ENCODE measurements at regions of chr5 and their contacts with region 1.

Region 1: DNA sequence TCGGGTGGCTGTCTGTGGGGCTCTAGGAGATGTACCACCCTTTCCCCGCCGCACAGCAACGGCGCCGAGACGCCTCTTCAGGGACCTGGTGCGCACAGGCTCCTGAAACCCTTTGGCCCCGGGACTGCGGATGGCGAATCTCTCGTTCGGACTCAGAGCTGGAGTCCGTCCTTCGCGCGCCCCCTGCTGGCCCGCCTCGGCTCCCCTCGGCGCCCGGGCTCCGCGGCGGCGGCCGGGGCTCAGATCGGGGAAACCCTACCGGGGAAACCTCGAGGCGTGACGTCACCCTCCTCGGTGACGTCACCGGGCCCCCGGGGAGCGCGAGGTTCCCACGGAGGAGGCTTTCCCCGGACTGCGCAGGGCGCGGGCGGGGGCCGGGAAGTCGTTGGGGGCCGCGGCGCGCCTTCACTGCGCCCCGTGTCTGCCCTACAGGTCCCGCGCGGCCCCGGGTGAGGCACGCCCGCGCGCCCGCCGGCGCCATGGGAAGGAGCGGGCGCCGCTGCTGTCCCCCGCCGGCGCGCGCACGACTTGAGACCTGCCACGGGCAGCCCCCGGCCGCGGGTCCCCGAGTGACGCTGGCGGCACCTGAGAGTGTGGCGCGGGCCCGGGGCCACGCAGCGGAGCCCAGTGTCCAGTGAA is 7.9 kb downstream of the PRR7 start:
- DNase-seq: peak; percentile 90 to 97 (median 95)
- H3K4me3 ChIP-seq: peak overlapping the region; percentile 59
- H3K4me3 Mint-ChIP-seq: peak overlapping the region; percentile 46 to 93 (median 89)
- H3K27ac ChIP-seq: peak overlapping the region; percentile 87
- H3K27ac Mint-ChIP-seq: peak overlapping the region in 7 of 8 donors; percentile 66 to 97 (median 85)
- H3K4me1 ChIP-seq: peaks cover 20% of the 10 kb centered on the region
- H3K4me1 Mint-ChIP-seq: peaks cover 19 to 32% (median 19%) of the 10 kb centered on the region in 3 donors
- H3K27me3 ChIP-seq: no peaks in the 10 kb centered on the region
- H3K27me3 Mint-ChIP-seq: peaks cover 0 to 4% of the 10 kb centered on the region in 2 donors

Region 2: DNA sequence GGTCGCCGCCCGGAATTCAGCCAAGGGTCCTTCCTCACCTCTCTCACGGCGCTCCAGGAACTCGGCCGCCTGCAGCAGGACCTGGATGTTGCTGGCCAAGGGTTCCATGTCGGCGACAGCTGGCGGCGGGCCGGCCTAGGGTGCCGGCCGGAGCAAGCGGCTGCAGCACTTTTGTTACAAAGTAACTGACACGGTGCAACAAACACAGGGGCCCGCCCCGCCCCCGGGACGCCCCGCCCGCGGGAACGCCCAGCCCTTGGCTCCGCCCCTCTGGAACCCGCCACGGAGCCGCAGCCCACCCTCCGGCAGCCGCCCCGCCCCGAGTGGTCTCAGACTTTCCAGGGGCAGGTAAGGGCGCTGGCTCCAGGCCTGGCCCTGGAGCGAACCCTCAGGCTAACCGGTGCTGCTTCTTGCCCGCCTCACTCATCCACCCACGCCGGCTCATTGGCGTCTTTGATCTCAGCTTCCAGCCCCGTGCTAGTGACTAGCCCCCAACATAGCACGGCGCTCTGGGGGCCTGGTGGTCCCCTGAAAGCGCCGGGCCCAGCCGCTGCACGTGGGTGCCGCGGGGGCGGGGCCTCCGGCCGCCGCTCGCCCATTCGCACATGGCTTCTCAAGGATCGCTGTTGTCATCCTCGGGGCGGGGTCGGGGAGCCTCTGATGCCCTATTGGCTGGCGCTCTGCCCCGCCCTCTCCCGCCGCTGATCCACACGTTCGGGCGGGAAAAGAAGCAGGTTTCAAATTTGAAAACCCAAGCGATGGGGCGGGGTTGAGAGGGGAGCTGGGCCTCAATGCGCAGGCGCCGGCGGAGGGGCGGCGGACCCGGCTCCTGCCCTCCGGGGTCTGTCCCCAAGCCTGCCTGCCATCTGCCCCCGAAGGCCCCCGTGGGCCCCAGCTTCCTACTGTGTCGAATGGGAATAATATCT is 142.5 kb before region 1 on chr5 and contains the start of gene MXD3:
- CTCF ChIA-PET with region 1: interaction called, 31 read pairs
- POLR2A ChIA-PET with region 1: interaction called, 5 read pairs
- DNase-seq: peak; percentile 92 to 96 (median 94)
- H3K4me3 ChIP-seq: peak within 1 kb of the TSS; percentile 70
- H3K4me3 Mint-ChIP-seq: peak within 1 kb of the TSS; percentile 70 to 92 (median 78)
- H3K27ac ChIP-seq: peak within 1 kb of the TSS; percentile 51
- H3K27ac Mint-ChIP-seq: peak within 1 kb of the TSS; percentile 32 to 84 (median 57)
- H3K4me1 ChIP-seq: peaks cover 20% of the 10 kb centered on the region
- H3K4me1 Mint-ChIP-seq: peaks cover 29 to 43% (median 30%) of the 10 kb centered on the region in 3 donors
- H3K27me3 ChIP-seq: no peaks in the 10 kb centered on the region
- H3K27me3 Mint-ChIP-seq: peaks cover 0 to 2% of the 10 kb centered on the region in 2 donors
- total RNA-seq, gene MXD3: 10.2 to 13.4 TPM

Region 3: GRCh38 chr5:177412603-177413233 is 41.8 kb before region 1 on chr5:
- CTCF ChIA-PET with region 1: interaction called, 307 read pairs
- POLR2A ChIA-PET with region 1: interaction called, 7 read pairs
- DNase-seq: peak in 1 of 5 donors; percentile 56
- H3K4me3 ChIP-seq: peak overlapping the region; percentile 41
- H3K4me3 Mint-ChIP-seq: peak overlapping the region; percentile 61 to 83 (median 74)
- H3K27ac ChIP-seq: peak overlapping the region; percentile 12
- H3K27ac Mint-ChIP-seq: peak overlapping the region; percentile 77 to 93 (median 90)
- H3K4me1 ChIP-seq: peaks cover 43% of the 10 kb centered on the region
- H3K4me1 Mint-ChIP-seq: peaks cover 25 to 58% (median 49%) of the 10 kb centered on the region in 3 donors
- H3K27me3 ChIP-seq: no peaks in the 10 kb centered on the region
- H3K27me3 Mint-ChIP-seq: no peaks in the 10 kb centered on the region

Region 4: GRCh38 chr5:177431317-177432142 is 23.0 kb before region 1 on chr5:
- CTCF ChIA-PET with region 1: interaction called, 326 read pairs
- POLR2A ChIA-PET with region 1: interaction called, 154 read pairs
- DNase-seq: peak; percentile 63 to 88 (median 78)
- H3K4me3 ChIP-seq: peak overlapping the region; percentile 88
- H3K4me3 Mint-ChIP-seq: peak overlapping the region; percentile 80 to 97 (median 94)
- H3K27ac ChIP-seq: peak overlapping the region; percentile 93
- H3K27ac Mint-ChIP-seq: peak overlapping the region; percentile 81 to 99 (median 95)
- H3K4me1 ChIP-seq: peaks cover 92% of the 10 kb centered on the region
- H3K4me1 Mint-ChIP-seq: peaks cover 58 to 88% (median 60%) of the 10 kb centered on the region in 3 donors
- H3K27me3 ChIP-seq: no peaks in the 10 kb centered on the region
- H3K27me3 Mint-ChIP-seq: peaks cover 0 to 4% of the 10 kb centered on the region in 2 donors

Region 5: GRCh38 chr5:177491429-177491945 is 37.0 kb after region 1 on chr5:
- CTCF ChIA-PET with region 1: interaction called, 116 read pairs
- POLR2A ChIA-PET with region 1: interaction called, 15 read pairs
- DNase-seq: no peak
- H3K4me3 ChIP-seq: no peak overlapping the region
- H3K4me3 Mint-ChIP-seq: peak overlapping the region in 1 of 7 donors; percentile 54
- H3K27ac ChIP-seq: no peak overlapping the region
- H3K27ac Mint-ChIP-seq: no peak overlapping the region
- H3K4me1 ChIP-seq: peaks cover 6% of the 10 kb centered on the region
- H3K4me1 Mint-ChIP-seq: peaks cover 0 to 23% (median 7%) of the 10 kb centered on the region in 3 donors
- H3K27me3 ChIP-seq: no peaks in the 10 kb centered on the region
- H3K27me3 Mint-ChIP-seq: no peaks in the 10 kb centered on the region

Measured in CD8-positive, alpha-beta memory T cell (primary cell).